H1 (cell line): ENCODE measurements at regions of chr16 and their contacts with region 1.

Region 1: DNA sequence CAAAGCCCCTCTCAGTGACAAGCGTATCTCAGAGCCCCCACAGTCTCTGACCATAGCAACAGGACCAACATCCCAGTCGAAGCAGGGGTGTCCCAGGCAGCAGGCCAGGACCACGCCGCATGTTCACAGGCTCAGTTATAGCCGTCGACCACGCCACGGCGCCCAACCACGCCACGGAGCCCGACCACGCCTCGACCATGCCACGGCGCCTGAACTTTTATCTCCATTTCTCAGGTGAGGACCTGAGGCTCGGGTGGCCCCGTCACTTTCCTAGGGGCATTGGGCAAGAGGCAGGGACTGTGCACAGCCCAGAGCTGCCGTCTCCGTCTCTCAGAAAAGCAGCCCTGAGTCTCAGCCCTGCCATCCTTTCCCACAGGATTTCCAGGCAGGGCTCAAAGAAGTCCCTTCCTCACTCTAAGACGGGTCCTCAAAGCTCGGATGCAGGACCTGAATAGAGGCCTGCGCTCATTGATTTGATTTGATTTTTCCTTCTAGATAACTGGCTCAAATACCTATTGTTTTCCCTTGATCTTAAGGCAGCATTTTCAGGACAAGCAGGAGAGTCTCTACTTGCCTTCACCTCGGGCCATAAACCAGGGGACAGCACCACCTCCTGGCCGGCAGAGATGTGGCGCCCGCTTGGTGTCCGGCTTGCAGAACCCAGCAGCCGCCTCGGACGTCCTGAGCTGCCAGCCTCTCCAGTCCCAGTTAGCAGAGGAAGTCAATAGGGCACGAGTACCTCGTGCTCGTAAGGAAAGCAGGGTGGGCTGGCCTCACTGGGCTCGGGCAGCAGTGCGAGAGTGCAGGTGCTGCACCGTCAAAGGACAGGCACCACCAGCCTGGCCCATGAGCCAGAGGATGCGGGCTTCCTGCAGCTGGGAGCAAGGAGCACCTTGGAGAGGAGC is 38.7 kb downstream of the C16orf95 start:
- DNase-seq: peak; percentile 77 to 90
- H3K4me3 ChIP-seq: no peak overlapping the region
- H3K27ac ChIP-seq: no peak overlapping the region
- H3K4me1 ChIP-seq: no peaks in the 10 kb centered on the region
- H3K27me3 ChIP-seq: no peaks in the 10 kb centered on the region; a peak in 1 of 7 replicates
- CTCF ChIP-seq: peak; percentile 89 to 97 (median 97)
- EP300 ChIP-seq: no peak
- POLR2A ChIP-seq: no peak
- RAD21 ChIP-seq: peak; percentile 95 to 97

Region 2: GRCh38 chr16:87156195-87156594 is 122.2 kb before region 1 on chr16:
- CTCF ChIA-PET with region 1: no interaction called
- POLR2A ChIA-PET with region 1: no interaction called
- DNase-seq: no peak
- H3K4me3 ChIP-seq: no peak overlapping the region
- H3K27ac ChIP-seq: no peak overlapping the region
- H3K4me1 ChIP-seq: no peaks in the 10 kb centered on the region
- H3K27me3 ChIP-seq: no peaks in the 10 kb centered on the region
- CTCF ChIP-seq: no peak
- EP300 ChIP-seq: no peak
- POLR2A ChIP-seq: no peak
- RAD21 ChIP-seq: no peak

Region 3: DNA sequence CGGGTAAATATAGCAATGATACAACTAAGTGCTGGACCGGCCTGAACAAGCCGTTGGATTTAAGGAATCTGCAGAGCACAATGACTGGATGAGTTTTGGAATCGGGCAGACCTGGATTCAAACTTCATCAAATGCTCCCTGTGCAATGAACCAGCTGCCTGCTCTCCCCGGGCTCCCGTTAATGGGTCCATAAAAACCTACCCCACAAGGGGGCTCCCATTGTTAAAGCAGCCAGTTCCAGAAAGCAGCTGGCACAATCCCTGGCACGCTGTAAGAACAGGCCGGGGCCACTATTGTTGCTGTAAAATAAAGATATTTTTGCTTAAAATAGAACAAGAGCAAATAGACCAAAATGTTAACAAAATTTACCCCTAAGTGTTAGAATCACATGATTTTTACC is 93.1 kb before region 1 on chr16:
- CTCF ChIA-PET with region 1: interaction called, 16 read pairs
- POLR2A ChIA-PET with region 1: no interaction called
- DNase-seq: no peak
- H3K4me3 ChIP-seq: no peak overlapping the region
- H3K27ac ChIP-seq: no peak overlapping the region
- H3K4me1 ChIP-seq: peaks cover 0 to 10% (median 4%) of the 10 kb centered on the region in 4 experiments; a peak in 4 of 7 replicates
- H3K27me3 ChIP-seq: no peaks in the 10 kb centered on the region; a peak in 1 of 7 replicates
- CTCF ChIP-seq: 0 out of 4 replicates have a peak, but pooled peaks of 1 of the 3 experiments have one; percentile 20
- EP300 ChIP-seq: no peak
- POLR2A ChIP-seq: no peak
- RAD21 ChIP-seq: peak in 1 of 2 experiments; percentile 39; a peak in 1 of 4 replicates

Region 4: GRCh38 chr16:87216474-87217275 is 61.8 kb before region 1 on chr16:
- CTCF ChIA-PET with region 1: interaction called, 12 read pairs
- POLR2A ChIA-PET with region 1: no interaction called
- DNase-seq: no peak
- H3K4me3 ChIP-seq: no peak overlapping the region
- H3K27ac ChIP-seq: no peak overlapping the region
- H3K4me1 ChIP-seq: no peaks in the 10 kb centered on the region
- H3K27me3 ChIP-seq: no peaks in the 10 kb centered on the region
- CTCF ChIP-seq: no peak
- EP300 ChIP-seq: no peak
- POLR2A ChIP-seq: no peak
- RAD21 ChIP-seq: no peak

Region 5: DNA sequence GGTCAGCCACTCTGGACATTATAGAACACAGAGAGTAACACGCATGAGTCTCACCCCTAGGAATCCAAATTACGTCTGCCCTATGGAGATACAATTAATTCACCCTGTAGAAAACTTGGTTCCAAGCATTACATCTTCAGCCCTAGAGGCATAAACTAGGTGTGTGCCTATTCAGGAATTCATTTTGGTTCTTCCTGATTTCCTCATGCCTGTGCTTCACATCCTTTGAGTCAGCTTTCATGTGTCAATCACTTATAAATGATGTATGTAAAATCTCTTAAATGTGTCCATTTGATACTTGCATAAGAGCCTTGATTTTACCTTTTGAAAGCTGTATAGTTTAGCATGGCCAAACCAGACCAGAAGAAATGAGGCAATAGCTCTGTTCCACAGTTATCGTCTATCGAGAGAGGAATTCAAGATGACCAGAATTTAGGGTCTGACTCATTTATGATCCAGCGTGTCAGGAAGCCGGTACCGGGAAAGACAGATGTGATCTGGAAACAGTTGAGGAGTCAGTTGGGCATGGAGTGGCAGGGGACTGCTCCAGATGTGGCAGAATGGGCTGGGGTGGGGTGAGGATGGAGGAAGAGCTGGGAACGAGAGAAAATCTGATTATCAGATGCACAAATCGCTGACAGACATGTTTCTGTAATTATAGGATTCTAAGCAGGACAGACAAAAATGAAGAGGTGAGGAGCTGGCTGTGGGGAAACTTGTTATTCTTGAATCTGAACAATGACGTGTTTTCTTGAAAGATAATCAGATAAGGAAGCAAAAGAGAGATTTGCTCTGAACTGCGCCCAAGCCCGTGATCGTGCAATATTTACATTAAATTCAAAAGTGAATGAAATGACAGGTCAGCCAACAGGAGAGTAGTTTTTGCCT is 38.0 kb before region 1 on chr16:
- CTCF ChIA-PET with region 1: interaction called, 20 read pairs
- POLR2A ChIA-PET with region 1: no interaction called
- DNase-seq: no peak
- H3K4me3 ChIP-seq: no peak overlapping the region
- H3K27ac ChIP-seq: no peak overlapping the region
- H3K4me1 ChIP-seq: peaks cover 5 to 14% (median 12%) of the 10 kb centered on the region in 4 experiments; a peak in 6 of 7 replicates
- H3K27me3 ChIP-seq: no peaks in the 10 kb centered on the region; a peak in 1 of 7 replicates
- CTCF ChIP-seq: no peak
- EP300 ChIP-seq: no peak
- POLR2A ChIP-seq: no peak
- RAD21 ChIP-seq: no peak

Region 6: DNA sequence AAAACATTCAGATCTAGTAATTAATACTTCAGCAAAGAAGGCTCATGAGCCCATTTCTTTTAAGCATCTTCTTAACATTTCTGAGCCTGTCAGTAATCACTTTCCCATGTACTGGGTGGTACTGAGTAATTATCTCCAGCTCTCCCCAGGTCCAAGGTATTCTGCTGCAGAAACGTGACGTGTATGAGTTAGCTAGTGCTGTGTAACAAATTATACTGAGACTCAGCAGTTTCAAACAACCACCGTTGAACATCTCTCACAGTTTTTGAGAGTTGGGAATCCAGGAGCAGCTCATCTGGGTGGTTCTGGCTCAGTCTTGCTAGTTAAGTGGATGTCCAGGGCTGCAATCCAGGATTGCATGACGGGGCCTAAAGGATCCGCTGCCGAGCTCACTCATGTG is 13.5 kb after region 1 on chr16:
- CTCF ChIA-PET with region 1: interaction called, 15 read pairs
- POLR2A ChIA-PET with region 1: no interaction called
- DNase-seq: no peak
- H3K4me3 ChIP-seq: no peak overlapping the region
- H3K27ac ChIP-seq: no peak overlapping the region
- H3K4me1 ChIP-seq: peaks cover 0 to 5% (median 2%) of the 10 kb centered on the region in 4 experiments; a peak in 3 of 7 replicates
- H3K27me3 ChIP-seq: peaks cover 0 to 2% (median 0%) of the 10 kb centered on the region in 4 experiments; a peak in 2 of 7 replicates
- CTCF ChIP-seq: no peak
- EP300 ChIP-seq: no peak
- POLR2A ChIP-seq: no peak
- RAD21 ChIP-seq: no peak

Region 7: DNA sequence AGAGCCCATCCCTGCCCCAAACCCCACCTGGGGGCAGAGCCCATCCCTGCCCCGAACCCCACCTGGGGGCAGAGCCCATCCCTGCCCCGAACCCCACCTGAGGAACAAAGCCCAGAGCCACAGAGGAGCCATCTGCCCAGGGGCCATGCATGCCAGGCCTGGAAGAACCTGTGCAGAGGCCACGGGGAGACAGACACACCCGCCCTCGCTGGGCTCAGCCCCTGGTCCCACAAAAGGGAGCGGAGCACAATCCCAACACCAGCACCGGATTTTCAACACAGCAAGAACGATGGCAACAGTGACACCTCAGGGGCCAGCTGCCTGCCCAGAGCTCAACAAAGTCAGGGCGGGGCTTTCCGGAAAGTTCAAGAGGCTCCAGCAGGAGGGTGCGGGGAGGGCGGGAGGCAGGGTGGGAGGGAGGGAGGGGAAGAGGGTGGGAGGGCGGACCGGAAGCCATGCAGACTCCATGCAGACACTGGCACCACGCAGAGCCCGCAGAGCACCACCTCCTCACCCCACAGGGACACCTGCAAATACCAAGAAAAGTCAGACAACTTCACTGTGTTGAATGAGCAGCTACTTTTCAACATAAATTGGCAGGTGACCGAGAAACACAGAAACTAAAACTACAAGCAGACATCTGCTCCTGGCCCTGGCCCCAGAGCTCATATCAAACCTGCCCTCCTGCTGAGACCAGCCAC is 66.6 kb after region 1 on chr16:
- CTCF ChIA-PET with region 1: no interaction called
- POLR2A ChIA-PET with region 1: no interaction called
- DNase-seq: no peak
- H3K4me3 ChIP-seq: no peak overlapping the region
- H3K27ac ChIP-seq: no peak overlapping the region
- H3K4me1 ChIP-seq: peaks cover 0 to 11% (median 1%) of the 10 kb centered on the region in 4 experiments; a peak in 3 of 7 replicates
- H3K27me3 ChIP-seq: no peaks in the 10 kb centered on the region
- CTCF ChIP-seq: no peak
- EP300 ChIP-seq: no peak
- POLR2A ChIP-seq: no peak
- RAD21 ChIP-seq: no peak